ENCODE measurements at regions of chr21 and their contacts with region 1.

Region 1: DNA sequence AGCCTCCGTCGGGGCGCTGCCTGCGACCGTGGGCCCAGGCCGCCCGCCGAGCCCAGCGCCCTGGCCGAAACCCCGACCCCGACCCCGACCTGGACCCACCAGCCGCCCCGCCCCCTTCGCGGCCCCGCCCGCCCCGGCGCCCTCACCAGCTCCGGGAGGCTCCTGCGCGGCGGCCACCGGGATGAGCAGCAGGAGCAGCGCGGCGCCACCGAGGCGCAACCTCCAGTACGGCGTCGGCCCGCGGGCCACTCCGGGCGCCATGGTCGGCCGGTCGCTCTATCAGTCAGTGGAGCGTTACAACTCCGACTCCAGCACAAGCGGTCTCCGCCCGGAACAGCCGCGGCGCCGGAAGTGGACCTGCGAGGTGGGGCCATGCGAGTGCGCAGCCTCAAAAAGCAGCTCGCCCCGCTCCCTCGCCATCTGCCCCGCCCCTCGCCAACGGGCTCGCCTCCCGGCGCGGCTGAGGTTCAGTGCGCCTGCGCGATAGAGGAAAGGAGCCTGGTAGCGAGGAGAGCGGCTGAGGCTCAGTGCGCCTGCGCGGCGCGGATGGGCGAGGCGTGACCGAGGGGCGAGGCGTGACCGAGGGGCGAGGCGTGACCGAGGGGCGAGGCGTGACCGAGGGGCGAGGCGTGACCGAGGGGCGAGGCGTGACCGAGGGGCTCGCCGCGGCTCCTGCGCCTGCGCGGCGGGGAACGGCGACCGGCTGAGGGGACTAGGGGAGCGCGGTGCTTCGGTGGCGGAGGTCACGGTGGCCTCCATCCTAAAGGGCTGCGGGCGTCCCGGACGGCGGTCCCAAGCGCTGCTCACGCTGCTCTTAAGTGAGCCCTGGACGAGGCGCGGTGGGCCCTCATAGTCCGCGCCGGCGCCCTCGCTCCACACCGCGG is at the start of gene PTTG1IP:
- DNase-seq: peak; percentile 98 to 100 (median 99)
- ATAC-seq: peak; percentile 82
- H3K4me3 ChIP-seq: peak within 1 kb of the TSS; percentile 60 to 76
- H3K4me3 Mint-ChIP-seq: peak within 1 kb of the TSS; percentile 93
- H3K27ac ChIP-seq: peak within 1 kb of the TSS; percentile 62 to 68
- H3K27ac Mint-ChIP-seq: peak within 1 kb of the TSS; percentile 91
- H3K4me1 ChIP-seq: peaks cover 43% of the 10 kb centered on the region
- H3K4me1 Mint-ChIP-seq: peaks cover 53% of the 10 kb centered on the region
- H3K27me3 ChIP-seq: no peaks in the 10 kb centered on the region
- H3K27me3 Mint-ChIP-seq: no peaks in the 10 kb centered on the region
- CTCF ChIP-seq: no peak
- total RNA-seq, gene PTTG1IP: 71.0 to 73.3 TPM

Region 2: GRCh38 chr21:43789276-43790009 is 1084.2 kb before region 1 on chr21 and contains the start of gene RRP1:
- CTCF ChIA-PET with region 1: no interaction called
- POLR2A ChIA-PET with region 1: no interaction called
- intact Hi-C with region 1: loop called in 1 of 2 experiments (anchors 5 kb)
- DNase-seq: peak; percentile 89 to 99 (median 95)
- ATAC-seq: peak; percentile 98
- H3K4me3 ChIP-seq: peak within 1 kb of the TSS; percentile 82 to 94
- H3K4me3 Mint-ChIP-seq: peak within 1 kb of the TSS; percentile 91
- H3K27ac ChIP-seq: peak within 1 kb of the TSS; percentile 71 to 78
- H3K27ac Mint-ChIP-seq: peak within 1 kb of the TSS; percentile 87
- H3K4me1 ChIP-seq: peaks cover 16% of the 10 kb centered on the region
- H3K4me1 Mint-ChIP-seq: peaks cover 21% of the 10 kb centered on the region
- H3K27me3 ChIP-seq: no peaks in the 10 kb centered on the region
- H3K27me3 Mint-ChIP-seq: no peaks in the 10 kb centered on the region
- CTCF ChIP-seq: peak; percentile 97
- total RNA-seq, gene RRP1: 26.8 to 26.9 TPM

Region 3: DNA sequence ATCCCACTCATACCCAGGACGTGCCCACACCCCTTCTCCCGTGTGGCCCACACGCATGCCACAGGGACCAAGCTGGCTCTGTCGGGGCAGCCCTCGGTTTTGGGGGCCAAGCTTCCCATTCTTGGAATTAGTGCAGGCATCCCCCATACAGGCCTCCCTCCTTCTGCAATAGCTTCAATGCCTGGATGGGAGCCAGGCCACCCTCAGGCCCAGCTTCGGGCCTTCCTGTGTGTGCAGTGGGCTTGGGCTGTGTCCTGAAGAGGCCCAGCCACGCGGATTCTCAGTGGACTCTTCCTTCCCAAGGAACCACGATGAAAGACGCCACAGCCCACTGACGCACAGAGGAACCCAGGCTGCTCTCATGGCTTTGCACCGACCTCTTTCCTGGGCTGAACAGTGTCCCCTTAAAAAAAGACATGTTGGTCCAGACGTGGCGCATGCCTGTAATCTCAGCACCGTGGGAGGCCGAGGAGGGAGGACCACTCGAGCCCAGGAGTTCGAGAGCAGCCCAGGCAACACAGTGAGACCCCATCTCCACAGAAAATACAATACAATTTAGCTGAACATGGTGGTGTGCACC is 224.0 kb before region 1 on chr21:
- CTCF ChIA-PET with region 1: no interaction called
- POLR2A ChIA-PET with region 1: no interaction called
- intact Hi-C with region 1: no loop called
- DNase-seq: no peak
- ATAC-seq: no peak
- H3K4me3 ChIP-seq: no peak overlapping the region
- H3K4me3 Mint-ChIP-seq: no peak overlapping the region
- H3K27ac ChIP-seq: no peak overlapping the region
- H3K27ac Mint-ChIP-seq: no peak overlapping the region
- H3K4me1 ChIP-seq: peaks cover 12% of the 10 kb centered on the region
- H3K4me1 Mint-ChIP-seq: peaks cover 35% of the 10 kb centered on the region
- H3K27me3 ChIP-seq: no peaks in the 10 kb centered on the region
- H3K27me3 Mint-ChIP-seq: no peaks in the 10 kb centered on the region
- CTCF ChIP-seq: no peak

Region 4: GRCh38 chr21:44801468-44802395 is 71.9 kb before region 1 on chr21 and contains the start of gene UBE2G2:
- CTCF ChIA-PET with region 1: interaction called, 21 read pairs
- POLR2A ChIA-PET with region 1: interaction called, 4 read pairs
- intact Hi-C with region 1: loop called (anchors 1 kb)
- DNase-seq: peak; percentile 70 to 91 (median 85)
- ATAC-seq: peak; percentile 88
- H3K4me3 ChIP-seq: peak within 1 kb of the TSS; percentile 76 to 95
- H3K4me3 Mint-ChIP-seq: peak within 1 kb of the TSS; percentile 95
- H3K27ac ChIP-seq: peak within 1 kb of the TSS; percentile 64 to 71
- H3K27ac Mint-ChIP-seq: peak within 1 kb of the TSS; percentile 92
- H3K4me1 ChIP-seq: peaks cover 20% of the 10 kb centered on the region
- H3K4me1 Mint-ChIP-seq: peaks cover 47% of the 10 kb centered on the region
- H3K27me3 ChIP-seq: no peaks in the 10 kb centered on the region
- H3K27me3 Mint-ChIP-seq: no peaks in the 10 kb centered on the region
- CTCF ChIP-seq: peak; percentile 52
- total RNA-seq, gene UBE2G2: 88.8 to 89.1 TPM

Region 5: GRCh38 chr21:44854664-44855446 is 18.7 kb before region 1 on chr21:
- CTCF ChIA-PET with region 1: interaction called, 4 read pairs
- POLR2A ChIA-PET with region 1: interaction called, 9 read pairs
- intact Hi-C with region 1: loop called in 1 of 2 experiments (anchors 2 kb)
- DNase-seq: peak in 4 of 9 experiments; percentile 34 to 47 (median 44)
- ATAC-seq: peak; percentile 67
- H3K4me3 ChIP-seq: no peak overlapping the region
- H3K4me3 Mint-ChIP-seq: peak overlapping the region; percentile 49
- H3K27ac ChIP-seq: peak overlapping the region; percentile 15 to 43
- H3K27ac Mint-ChIP-seq: peak overlapping the region; percentile 92
- H3K4me1 ChIP-seq: peaks cover 28% of the 10 kb centered on the region
- H3K4me1 Mint-ChIP-seq: peaks cover 33% of the 10 kb centered on the region
- H3K27me3 ChIP-seq: no peaks in the 10 kb centered on the region
- H3K27me3 Mint-ChIP-seq: no peaks in the 10 kb centered on the region
- CTCF ChIP-seq: no peak

Region 6: GRCh38 chr21:44927587-44928461 is 54.2 kb after region 1 on chr21:
- CTCF ChIA-PET with region 1: interaction called, 42 read pairs
- POLR2A ChIA-PET with region 1: interaction called, 31 read pairs
- intact Hi-C with region 1: loop called (anchors 2 to 5 kb)
- DNase-seq: peak; percentile 59 to 96 (median 90)
- ATAC-seq: peak; percentile 78
- H3K4me3 ChIP-seq: peak overlapping the region; percentile 68 to 92
- H3K4me3 Mint-ChIP-seq: peak overlapping the region; percentile 91
- H3K27ac ChIP-seq: peak overlapping the region; percentile 75 to 79
- H3K27ac Mint-ChIP-seq: peak overlapping the region; percentile 96
- H3K4me1 ChIP-seq: peaks cover 82% of the 10 kb centered on the region
- H3K4me1 Mint-ChIP-seq: peaks cover 76% of the 10 kb centered on the region
- H3K27me3 ChIP-seq: no peaks in the 10 kb centered on the region
- H3K27me3 Mint-ChIP-seq: no peaks in the 10 kb centered on the region
- CTCF ChIP-seq: no peak

Measured in CD8-positive, alpha-beta T cell (primary cell).